ENCODE measurements at regions of chr1 and their contacts with region 1.

Region 1: DNA sequence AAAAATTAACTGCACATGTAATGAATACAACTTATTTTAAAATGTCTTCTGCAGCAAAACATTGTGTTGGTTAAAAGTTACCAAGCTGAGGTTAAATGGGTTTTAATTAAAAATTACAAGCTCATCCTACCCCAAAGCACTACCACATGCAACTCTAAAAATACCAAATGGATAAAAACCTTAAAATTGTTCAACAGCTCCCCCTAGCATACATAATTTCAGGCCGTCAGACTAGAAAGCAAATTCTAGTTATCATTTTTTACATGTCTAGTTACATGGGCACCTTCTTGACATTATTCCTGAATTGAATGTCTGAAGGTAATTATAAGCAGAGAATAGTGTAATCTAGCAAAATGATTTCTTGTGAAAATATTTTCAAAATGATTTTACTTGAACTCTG is 176.5 kb downstream of the C1orf21 start:
- DNase-seq: no peak
- ATAC-seq: peak; percentile 67

Region 2: DNA sequence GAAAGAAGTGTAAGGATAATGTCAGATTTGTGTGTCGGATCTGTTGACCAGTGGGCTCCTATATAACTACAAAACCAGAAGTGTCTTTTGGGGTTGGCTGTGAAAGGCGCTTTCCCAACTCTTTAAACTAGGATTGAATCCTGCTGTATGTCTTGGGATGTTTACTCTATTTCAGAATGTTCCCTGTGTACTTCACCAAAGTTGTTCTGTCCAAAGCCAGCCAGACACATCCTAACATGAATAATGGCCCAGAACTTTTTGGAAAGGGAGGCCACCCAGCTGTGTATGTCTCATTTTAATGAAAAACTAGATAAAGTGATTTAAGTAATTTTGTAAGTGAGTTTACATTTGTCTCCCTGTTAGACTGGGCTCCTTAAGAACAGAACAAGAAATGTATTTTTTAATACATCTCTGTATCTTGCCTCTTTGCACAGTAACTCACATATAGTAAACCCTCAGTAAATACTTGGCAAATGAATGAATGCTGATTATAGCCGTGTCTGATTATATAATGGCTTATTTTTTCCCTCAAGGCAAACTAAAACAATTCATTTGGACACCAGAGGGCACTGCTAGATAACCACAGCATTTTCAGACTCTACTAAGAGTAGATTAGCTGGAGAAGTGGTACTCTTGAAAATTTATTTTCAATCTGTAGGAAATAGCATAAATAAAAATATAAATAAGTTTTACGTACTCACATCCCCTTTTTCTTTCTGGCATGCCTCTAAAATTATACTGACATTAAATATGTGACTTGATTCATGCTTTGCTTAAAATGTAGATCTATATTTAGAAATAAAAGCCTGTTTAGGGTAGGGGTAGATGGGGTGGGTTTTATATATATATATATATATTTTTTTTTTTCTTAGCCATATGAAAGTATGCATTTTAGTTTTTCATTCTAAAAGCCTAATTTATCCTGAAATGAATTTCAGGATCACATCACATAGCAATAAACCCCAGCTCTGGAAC is 488.0 kb before region 1 on chr1:
- intact Hi-C with region 1: loop called (anchors 10 kb)
- DNase-seq: no peak
- ATAC-seq: peak; percentile 89

Region 3: GRCh38 chr1:184386312-184387068 is 176.8 kb before region 1 on chr1 and contains the start of gene C1orf21:
- intact Hi-C with region 1: loop called (anchors 10 kb)
- DNase-seq: peak; percentile 95
- ATAC-seq: peak; percentile 95
- total RNA-seq, gene C1orf21: 45.6 TPM

Region 4: DNA sequence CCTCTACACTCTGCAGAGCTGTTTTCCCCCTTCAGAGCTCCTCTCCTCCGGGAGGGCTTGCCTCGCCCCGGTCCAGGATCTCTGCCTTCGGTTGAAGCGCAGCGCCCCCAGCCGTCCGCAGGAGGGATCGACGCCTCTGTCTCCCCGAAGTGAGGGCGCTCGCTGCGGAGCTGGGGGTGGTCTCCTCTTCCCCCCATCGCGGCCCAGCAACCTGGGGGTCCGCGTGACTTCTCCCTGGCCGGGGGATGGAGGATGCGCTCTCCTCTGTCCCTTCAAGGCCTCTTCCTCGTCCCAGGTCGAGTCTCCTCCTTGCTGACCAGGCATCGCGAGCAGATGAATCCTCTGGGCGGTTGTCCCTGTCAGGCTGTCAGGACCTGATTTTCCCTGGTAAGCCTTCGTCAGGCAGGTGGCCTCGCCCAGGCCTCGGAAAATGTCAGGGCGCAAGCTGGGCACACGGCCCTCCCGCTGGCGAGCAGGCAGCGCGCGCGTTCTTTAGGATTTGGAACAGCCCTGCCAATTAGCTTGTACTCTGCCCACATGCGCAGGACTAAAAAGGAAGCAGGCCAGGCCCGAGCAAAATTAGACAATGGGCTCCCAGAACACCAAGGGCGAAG is 100.8 kb after region 1 on chr1:
- intact Hi-C with region 1: loop called (anchors 5 kb)
- DNase-seq: peak; percentile 90
- ATAC-seq: peak; percentile 96

Measured in left ventricle myocardium superior (tissue), 1 donor.